ENCODE measurements at regions of chr19 and their contacts with region 1.

Region 1: GRCh38 chr19:6737284-6738046 is at the start of gene GPR108:
- DNase-seq: peak; percentile 100
- H3K4me3 Mint-ChIP-seq: peak within 1 kb of the TSS; percentile 98
- H3K27ac Mint-ChIP-seq: peak within 1 kb of the TSS; percentile 99
- H3K4me1 Mint-ChIP-seq: peaks cover 38% of the 10 kb centered on the region
- H3K27me3 Mint-ChIP-seq: no peaks in the 10 kb centered on the region
- total RNA-seq, gene GPR108: 97.7 and 107 TPM in 2 replicates

Region 2: GRCh38 chr19:6372594-6373095 is 364.8 kb before region 1 on chr19 and contains the start of gene ALKBH7:
- intact Hi-C with region 1: loop called (anchors 2 kb)
- DNase-seq: peak; percentile 99
- H3K4me3 Mint-ChIP-seq: peak within 1 kb of the TSS; percentile 92
- H3K27ac Mint-ChIP-seq: peak within 1 kb of the TSS; percentile 94
- H3K4me1 Mint-ChIP-seq: peaks cover 11% of the 10 kb centered on the region
- H3K27me3 Mint-ChIP-seq: no peaks in the 10 kb centered on the region
- total RNA-seq, gene ALKBH7: 23.9 and 25.0 TPM in 2 replicates

Region 3: GRCh38 chr19:6530386-6531161 is 206.9 kb before region 1 on chr19 and contains the start of gene TNFSF9:
- intact Hi-C with region 1: loop called (anchors 5 kb)
- DNase-seq: peak; percentile 95
- H3K4me3 Mint-ChIP-seq: peak within 1 kb of the TSS; percentile 87
- H3K27ac Mint-ChIP-seq: peak within 1 kb of the TSS; percentile 84
- H3K4me1 Mint-ChIP-seq: peaks cover 31% of the 10 kb centered on the region
- H3K27me3 Mint-ChIP-seq: peaks cover 36% of the 10 kb centered on the region
- total RNA-seq, gene TNFSF9: 6.1 and 6.4 TPM in 2 replicates

Region 4: GRCh38 chr19:6663236-6664201 is 73.9 kb before region 1 on chr19:
- intact Hi-C with region 1: loop called (anchors 1 kb)
- DNase-seq: no peak
- H3K4me3 Mint-ChIP-seq: peak overlapping the region; percentile 39
- H3K27ac Mint-ChIP-seq: no peak overlapping the region
- H3K4me1 Mint-ChIP-seq: peaks cover 46% of the 10 kb centered on the region
- H3K27me3 Mint-ChIP-seq: no peaks in the 10 kb centered on the region

Region 5: GRCh38 chr19:6753178-6754031 is 15.9 kb after region 1 on chr19:
- intact Hi-C with region 1: loop called (anchors 1 kb)
- DNase-seq: peak; percentile 95
- H3K4me3 Mint-ChIP-seq: peak overlapping the region; percentile 81
- H3K27ac Mint-ChIP-seq: peak overlapping the region; percentile 96
- H3K4me1 Mint-ChIP-seq: peaks cover 15% of the 10 kb centered on the region
- H3K27me3 Mint-ChIP-seq: no peaks in the 10 kb centered on the region

Region 6: DNA sequence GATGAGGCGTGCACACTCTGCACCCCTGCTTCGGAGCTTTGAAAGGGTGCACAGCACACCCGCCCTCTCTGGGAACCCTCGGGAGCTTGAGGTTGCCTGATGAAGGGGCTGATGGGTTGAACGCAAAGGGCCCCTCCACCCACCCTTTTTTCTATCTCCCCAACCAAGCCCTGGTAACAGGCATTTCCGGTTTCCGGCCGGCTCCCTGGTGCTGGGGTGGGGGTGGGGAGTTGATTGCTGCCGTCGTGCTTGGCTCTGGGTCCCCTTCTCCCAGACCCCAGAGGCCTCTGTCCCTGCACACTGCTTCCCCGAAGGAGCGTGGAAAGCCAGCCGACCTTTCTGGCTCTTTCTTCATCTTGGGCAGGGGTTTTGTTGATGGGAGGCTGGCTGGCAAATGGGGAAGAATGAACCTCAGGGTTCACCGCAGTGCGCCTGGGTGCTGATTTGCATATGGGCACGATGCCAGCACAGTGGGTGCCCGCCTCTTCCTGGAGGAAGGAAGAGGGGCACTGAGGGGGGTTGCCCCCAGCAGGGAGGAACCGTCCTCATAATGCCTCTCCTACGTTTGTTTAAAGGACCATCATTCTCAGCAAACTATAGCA is 64.1 kb after region 1 on chr19:
- intact Hi-C with region 1: loop called (anchors 2 kb)
- DNase-seq: peak; percentile 93
- H3K4me3 Mint-ChIP-seq: peak overlapping the region; percentile 93
- H3K27ac Mint-ChIP-seq: peak overlapping the region; percentile 99
- H3K4me1 Mint-ChIP-seq: peaks cover 55% of the 10 kb centered on the region
- H3K27me3 Mint-ChIP-seq: no peaks in the 10 kb centered on the region

Region 7: GRCh38 chr19:7629347-7630054 is 892.0 kb after region 1 on chr19 and contains the starts of genes PET100 and XAB2:
- intact Hi-C with region 1: loop called (anchors 5 kb)
- DNase-seq: peak; percentile 98
- H3K4me3 Mint-ChIP-seq: peak within 1 kb of the TSS; percentile 94
- H3K27ac Mint-ChIP-seq: peak within 1 kb of the TSS; percentile 98
- H3K4me1 Mint-ChIP-seq: peaks cover 33% of the 10 kb centered on the region
- H3K27me3 Mint-ChIP-seq: no peaks in the 10 kb centered on the region
- total RNA-seq, gene PET100: 99.2 and 110 TPM in 2 replicates
- total RNA-seq, gene XAB2: 51.0 and 51.6 TPM in 2 replicates